ENCODE measurements at regions of chr17 and their contacts with region 1.

Region 1: GRCh38 chr17:19977311-19978208 is at the start of gene AKAP10:
- DNase-seq: peak; percentile 87 to 95 (median 93)
- ATAC-seq: peak; percentile 84
- H3K4me3 ChIP-seq: peak within 1 kb of the TSS; percentile 67 to 89
- H3K4me3 Mint-ChIP-seq: peak within 1 kb of the TSS; percentile 94
- H3K27ac ChIP-seq: peak within 1 kb of the TSS; percentile 76 to 95
- H3K27ac Mint-ChIP-seq: peak within 1 kb of the TSS; percentile 95
- H3K4me1 ChIP-seq: peaks cover 29% of the 10 kb centered on the region
- H3K4me1 Mint-ChIP-seq: peaks cover 53% of the 10 kb centered on the region
- H3K27me3 ChIP-seq: no peaks in the 10 kb centered on the region
- H3K27me3 Mint-ChIP-seq: no peaks in the 10 kb centered on the region
- CTCF ChIP-seq: no peak
- total RNA-seq, gene AKAP10: 21.5 to 29.6 TPM

Region 2: GRCh38 chr17:19377602-19378392 is 599.8 kb before region 1 on chr17:
- CTCF ChIA-PET with region 1: no interaction called
- POLR2A ChIA-PET with region 1: no interaction called
- intact Hi-C with region 1: loop called in 1 of 2 experiments (anchors 5 kb)
- DNase-seq: peak; percentile 82 to 98 (median 93)
- ATAC-seq: peak; percentile 89
- H3K4me3 ChIP-seq: peak overlapping the region; percentile 81 to 96
- H3K4me3 Mint-ChIP-seq: peak overlapping the region; percentile 100
- H3K27ac ChIP-seq: peak overlapping the region; percentile 81 to 86
- H3K27ac Mint-ChIP-seq: peak overlapping the region; percentile 96
- H3K4me1 ChIP-seq: peaks cover 6% of the 10 kb centered on the region
- H3K4me1 Mint-ChIP-seq: peaks cover 15% of the 10 kb centered on the region
- H3K27me3 ChIP-seq: no peaks in the 10 kb centered on the region
- H3K27me3 Mint-ChIP-seq: no peaks in the 10 kb centered on the region
- CTCF ChIP-seq: no peak

Region 3: DNA sequence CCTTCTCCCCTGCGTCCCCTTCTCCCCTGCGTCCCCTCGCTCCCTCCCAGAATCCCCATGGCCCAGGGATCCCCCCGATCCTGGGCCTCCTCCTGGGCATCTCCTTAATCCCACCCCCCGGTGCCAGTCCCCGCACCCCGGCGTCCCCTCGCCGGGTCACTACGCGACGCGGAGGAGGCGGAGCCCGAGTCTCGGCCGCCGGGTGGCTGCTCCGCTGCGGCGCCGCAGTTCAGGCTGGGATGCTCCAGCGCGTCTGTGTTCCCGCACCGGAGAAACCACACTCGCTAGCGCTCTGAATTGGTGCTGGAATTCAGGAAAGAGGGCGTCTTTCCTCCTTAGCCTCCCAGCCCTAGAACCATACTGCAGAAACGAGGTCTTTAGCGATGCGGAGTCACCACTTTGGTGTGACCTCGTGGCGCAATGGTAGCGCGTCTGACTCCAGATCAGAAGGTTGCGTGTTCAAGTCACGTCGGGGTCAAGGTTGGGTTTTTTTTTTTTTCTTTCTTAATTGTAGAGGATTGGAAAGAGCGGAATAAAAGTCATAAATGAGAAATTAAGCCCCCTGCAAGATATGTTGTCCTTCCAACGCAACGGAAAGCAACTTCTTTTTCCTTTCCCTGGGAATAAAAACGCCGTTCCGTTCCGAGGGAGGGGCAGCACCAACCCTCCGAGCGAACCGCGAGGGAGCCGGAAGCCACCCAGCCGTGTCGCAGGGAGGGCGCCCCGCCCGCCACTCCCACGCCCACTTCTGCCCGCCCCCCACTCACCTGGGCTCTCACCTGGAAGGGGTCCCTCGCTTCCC is 469.6 kb before region 1 on chr17:
- CTCF ChIA-PET with region 1: no interaction called
- POLR2A ChIA-PET with region 1: no interaction called
- intact Hi-C with region 1: loop called in 1 of 2 experiments (anchors 10 kb)
- DNase-seq: peak; percentile 79 to 95 (median 87)
- ATAC-seq: peak; percentile 73
- H3K4me3 ChIP-seq: peak overlapping the region; percentile 73 to 78
- H3K4me3 Mint-ChIP-seq: peak overlapping the region; percentile 87
- H3K27ac ChIP-seq: peak overlapping the region; percentile 19 to 62
- H3K27ac Mint-ChIP-seq: peak overlapping the region; percentile 98
- H3K4me1 ChIP-seq: peaks cover 7% of the 10 kb centered on the region
- H3K4me1 Mint-ChIP-seq: peaks cover 7% of the 10 kb centered on the region
- H3K27me3 ChIP-seq: no peaks in the 10 kb centered on the region
- H3K27me3 Mint-ChIP-seq: no peaks in the 10 kb centered on the region
- CTCF ChIP-seq: no peak

Region 4: GRCh38 chr17:19867064-19867313 is 110.6 kb before region 1 on chr17:
- CTCF ChIA-PET with region 1: interaction called, 3 read pairs
- POLR2A ChIA-PET with region 1: interaction called, 7 read pairs
- intact Hi-C with region 1: loop called (anchors 1 to 10 kb)
- DNase-seq: peak; percentile 19 to 74 (median 49)
- ATAC-seq: peak; percentile 50
- H3K4me3 ChIP-seq: peak overlapping the region; percentile 68 to 80
- H3K4me3 Mint-ChIP-seq: peak overlapping the region; percentile 81
- H3K27ac ChIP-seq: peak overlapping the region; percentile 54 to 68
- H3K27ac Mint-ChIP-seq: peak overlapping the region; percentile 79
- H3K4me1 ChIP-seq: peaks cover 46% of the 10 kb centered on the region
- H3K4me1 Mint-ChIP-seq: peaks cover 42% of the 10 kb centered on the region
- H3K27me3 ChIP-seq: no peaks in the 10 kb centered on the region
- H3K27me3 Mint-ChIP-seq: no peaks in the 10 kb centered on the region
- CTCF ChIP-seq: peak; percentile 3

Region 5: GRCh38 chr17:19992803-19993713 is 15.5 kb after region 1 on chr17:
- CTCF ChIA-PET with region 1: interaction called, 13 read pairs
- POLR2A ChIA-PET with region 1: no interaction called
- intact Hi-C with region 1: loop called in 1 of 2 experiments (anchors 2 kb)
- DNase-seq: peak; percentile 39 to 87 (median 76)
- ATAC-seq: peak; percentile 99
- H3K4me3 ChIP-seq: no peak overlapping the region
- H3K4me3 Mint-ChIP-seq: no peak overlapping the region
- H3K27ac ChIP-seq: no peak overlapping the region
- H3K27ac Mint-ChIP-seq: no peak overlapping the region
- H3K4me1 ChIP-seq: peaks cover 3% of the 10 kb centered on the region
- H3K4me1 Mint-ChIP-seq: peaks cover 4% of the 10 kb centered on the region
- H3K27me3 ChIP-seq: no peaks in the 10 kb centered on the region
- H3K27me3 Mint-ChIP-seq: peaks cover 5% of the 10 kb centered on the region
- CTCF ChIP-seq: peak; percentile 59

Region 6: GRCh38 chr17:20155258-20156195 is 178.0 kb after region 1 on chr17:
- CTCF ChIA-PET with region 1: no interaction called
- POLR2A ChIA-PET with region 1: no interaction called
- intact Hi-C with region 1: loop called in 1 of 2 experiments (anchors 5 kb)
- DNase-seq: peak; percentile 87 to 98 (median 95)
- ATAC-seq: peak; percentile 98
- H3K4me3 ChIP-seq: peak overlapping the region; percentile 48 to 70
- H3K4me3 Mint-ChIP-seq: no peak overlapping the region
- H3K27ac ChIP-seq: peak overlapping the region; percentile 21 to 47
- H3K27ac Mint-ChIP-seq: no peak overlapping the region
- H3K4me1 ChIP-seq: peaks cover 16% of the 10 kb centered on the region
- H3K4me1 Mint-ChIP-seq: peaks cover 3% of the 10 kb centered on the region
- H3K27me3 ChIP-seq: no peaks in the 10 kb centered on the region
- H3K27me3 Mint-ChIP-seq: no peaks in the 10 kb centered on the region
- CTCF ChIP-seq: no peak